WTC11 (cell line): ENCODE measurements at regions of chr22 and their contacts with region 1.

Region 1: DNA sequence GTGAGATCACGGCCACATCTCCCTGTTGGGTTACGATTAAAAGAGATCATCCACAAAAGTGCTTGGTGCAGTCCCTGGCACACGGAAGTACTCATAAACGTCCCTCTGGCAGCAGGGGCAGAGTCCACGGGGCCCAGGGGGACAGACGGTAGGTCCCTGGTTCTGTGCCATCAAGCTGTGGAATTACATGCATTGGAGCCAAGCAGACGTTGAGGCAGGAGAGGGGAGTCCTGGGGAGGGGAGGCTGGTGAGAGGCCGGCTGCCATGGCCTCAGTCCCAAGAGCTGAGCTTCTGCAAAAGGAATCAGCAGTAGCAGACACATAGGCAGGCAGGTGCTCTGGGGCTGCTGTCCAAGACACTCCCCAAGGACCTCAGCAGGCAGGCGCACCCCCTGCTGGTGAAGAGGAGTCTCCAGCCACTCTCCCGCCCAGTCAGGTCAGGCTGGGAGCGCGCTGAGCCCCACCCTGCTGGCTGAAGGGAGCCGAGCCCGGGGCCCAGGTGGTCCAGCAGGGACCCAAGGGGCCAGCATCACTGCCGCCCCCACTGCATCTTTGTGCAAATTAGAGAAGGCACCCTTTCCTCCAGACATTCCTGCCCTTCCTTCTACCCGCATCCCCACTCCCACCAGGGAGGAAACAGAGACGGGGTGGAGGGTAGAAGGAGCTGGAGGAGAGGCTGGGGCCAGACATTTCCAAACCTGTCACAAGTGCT is 7.6 kb upstream of the KCTD17 start:
- DNase-seq: peak; percentile 50
- ATAC-seq: peak; percentile 77
- H3K4me3 Mint-ChIP-seq: no peak overlapping the region
- H3K27ac Mint-ChIP-seq: no peak overlapping the region
- H3K4me1 Mint-ChIP-seq: peaks cover 10% of the 10 kb centered on the region
- H3K27me3 Mint-ChIP-seq: peaks cover 11% of the 10 kb centered on the region
- CTCF ChIP-seq: no peak

Region 2: GRCh38 chr22:37075046-37075445 is 31.1 kb after region 1 on chr22:
- CTCF ChIA-PET with region 1: interaction called, 11 read pairs
- POLR2A ChIA-PET with region 1: no interaction called
- DNase-seq: no peak
- ATAC-seq: no peak
- H3K4me3 Mint-ChIP-seq: no peak overlapping the region
- H3K27ac Mint-ChIP-seq: no peak overlapping the region
- H3K4me1 Mint-ChIP-seq: peaks cover 8% of the 10 kb centered on the region
- H3K27me3 Mint-ChIP-seq: peaks cover 14% of the 10 kb centered on the region
- CTCF ChIP-seq: no peak

Region 3: DNA sequence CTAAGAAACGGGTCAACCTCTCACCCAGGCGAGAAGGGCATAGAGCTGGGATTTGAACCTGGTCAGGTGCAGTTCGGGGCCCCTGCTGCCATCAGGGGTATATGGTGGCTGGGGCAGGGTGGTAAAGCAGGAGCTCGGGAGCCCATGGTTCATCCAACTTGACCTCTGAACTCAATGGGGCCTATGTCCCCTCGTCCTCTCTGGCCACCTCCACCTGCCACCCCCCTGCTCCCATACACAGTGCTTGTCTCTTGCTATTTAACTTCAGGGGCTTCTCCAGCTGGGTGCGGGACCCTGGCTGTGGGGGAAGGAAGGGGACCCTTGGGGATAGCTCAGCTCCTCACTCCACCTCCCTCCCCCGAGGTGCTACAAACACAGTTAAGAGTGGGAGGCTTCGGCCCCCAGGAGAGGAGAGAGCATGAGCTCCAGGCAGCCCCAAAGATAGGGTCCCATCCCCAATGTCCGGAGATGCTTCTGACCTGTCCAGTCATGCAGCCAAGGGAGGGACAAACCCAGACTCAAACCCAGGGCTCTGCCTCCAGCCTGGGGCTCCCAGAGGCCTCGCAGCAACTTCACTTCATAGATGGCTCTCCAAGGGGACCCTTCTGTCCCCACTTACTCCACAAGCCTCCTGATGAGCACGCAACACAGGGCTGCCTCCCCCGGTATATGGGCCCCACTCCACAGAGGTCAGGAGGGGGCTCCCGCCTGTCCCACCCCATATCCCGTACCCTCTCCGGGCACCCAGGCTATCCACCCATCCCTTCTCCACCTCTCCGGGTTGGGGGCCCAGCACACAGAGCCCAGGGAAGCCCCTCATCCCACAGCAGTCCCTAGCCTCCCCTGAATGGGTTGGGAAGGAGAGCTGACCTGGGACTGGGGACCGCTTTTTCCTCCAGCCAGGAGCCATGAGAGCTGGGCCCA is 105.0 kb after region 1 on chr22:
- CTCF ChIA-PET with region 1: interaction called, 13 read pairs
- POLR2A ChIA-PET with region 1: no interaction called
- DNase-seq: no peak
- ATAC-seq: no peak
- H3K4me3 Mint-ChIP-seq: no peak overlapping the region
- H3K27ac Mint-ChIP-seq: no peak overlapping the region
- H3K4me1 Mint-ChIP-seq: peaks cover 15% of the 10 kb centered on the region
- H3K27me3 Mint-ChIP-seq: peaks cover 5% of the 10 kb centered on the region
- CTCF ChIP-seq: no peak

Region 4: DNA sequence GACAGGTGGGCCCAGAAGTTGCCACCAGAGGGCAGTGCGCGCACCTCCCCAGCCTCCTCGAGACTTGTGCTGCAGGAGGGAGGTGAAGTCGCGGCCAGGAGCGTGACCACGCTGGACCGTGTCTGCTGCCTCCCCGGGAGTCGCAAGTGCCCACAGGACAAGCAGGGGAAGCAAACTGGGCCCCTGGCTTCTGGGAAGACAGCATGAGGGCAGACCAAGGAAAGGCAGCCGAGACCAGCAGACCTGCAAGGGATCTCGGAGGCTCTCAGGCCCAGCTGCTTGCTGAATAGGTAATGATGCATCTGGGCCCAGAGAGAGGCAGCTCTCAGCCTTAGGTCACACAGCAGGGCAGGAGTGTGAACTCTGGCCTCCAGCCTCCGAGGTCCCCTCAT is 122.7 kb after region 1 on chr22:
- CTCF ChIA-PET with region 1: interaction called, 10 read pairs
- POLR2A ChIA-PET with region 1: no interaction called
- DNase-seq: peak; percentile 84
- ATAC-seq: peak; percentile 88
- H3K4me3 Mint-ChIP-seq: no peak overlapping the region; the same call in 1 of the 2 replicates
- H3K27ac Mint-ChIP-seq: no peak overlapping the region
- H3K4me1 Mint-ChIP-seq: peaks cover 16% of the 10 kb centered on the region
- H3K27me3 Mint-ChIP-seq: peaks cover 7% of the 10 kb centered on the region
- CTCF ChIP-seq: no peak; the same call in 1 of the 2 replicates